MCF 10A (cell line): ENCODE measurements at regions of chr11 and their contacts with region 1.

Region 1: GRCh38 chr11:110185121-110185591 is 92.0 kb downstream of the ZC3H12C start:
- DNase-seq: peak; percentile 85
- H3K4me3 Mint-ChIP-seq: peak overlapping the region; percentile 17
- H3K27ac Mint-ChIP-seq: peak overlapping the region; percentile 89
- H3K4me1 Mint-ChIP-seq: peaks cover 41% of the 10 kb centered on the region
- H3K27me3 Mint-ChIP-seq: no peaks in the 10 kb centered on the region
- CTCF ChIP-seq: no peak

Region 2: DNA sequence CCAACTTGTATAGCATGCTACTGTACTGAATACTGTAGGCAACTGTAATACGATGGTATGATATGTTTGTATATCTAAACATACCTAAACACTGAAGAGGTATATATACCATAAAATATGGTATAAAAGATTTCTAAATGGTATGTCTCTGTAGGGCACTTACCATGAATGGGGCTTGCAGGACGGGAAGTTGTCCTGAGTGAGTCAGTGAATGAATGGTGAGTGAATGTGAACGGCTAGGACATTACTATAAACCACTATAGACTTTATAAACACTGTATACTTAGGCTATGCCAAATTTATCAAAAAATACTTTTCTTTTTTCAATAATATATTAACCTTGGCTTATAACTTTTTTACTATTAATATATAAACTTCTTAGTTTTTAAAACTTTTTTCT is 25.1 kb before region 1 on chr11:
- CTCF ChIA-PET with region 1: no interaction called
- POLR2A ChIA-PET with region 1: no interaction called
- intact Hi-C with region 1: no loop called
- DNase-seq: no peak
- H3K4me3 Mint-ChIP-seq: no peak overlapping the region
- H3K27ac Mint-ChIP-seq: peak overlapping the region; percentile 41
- H3K4me1 Mint-ChIP-seq: peaks cover 4% of the 10 kb centered on the region
- H3K27me3 Mint-ChIP-seq: no peaks in the 10 kb centered on the region
- CTCF ChIP-seq: no peak

Region 3: DNA sequence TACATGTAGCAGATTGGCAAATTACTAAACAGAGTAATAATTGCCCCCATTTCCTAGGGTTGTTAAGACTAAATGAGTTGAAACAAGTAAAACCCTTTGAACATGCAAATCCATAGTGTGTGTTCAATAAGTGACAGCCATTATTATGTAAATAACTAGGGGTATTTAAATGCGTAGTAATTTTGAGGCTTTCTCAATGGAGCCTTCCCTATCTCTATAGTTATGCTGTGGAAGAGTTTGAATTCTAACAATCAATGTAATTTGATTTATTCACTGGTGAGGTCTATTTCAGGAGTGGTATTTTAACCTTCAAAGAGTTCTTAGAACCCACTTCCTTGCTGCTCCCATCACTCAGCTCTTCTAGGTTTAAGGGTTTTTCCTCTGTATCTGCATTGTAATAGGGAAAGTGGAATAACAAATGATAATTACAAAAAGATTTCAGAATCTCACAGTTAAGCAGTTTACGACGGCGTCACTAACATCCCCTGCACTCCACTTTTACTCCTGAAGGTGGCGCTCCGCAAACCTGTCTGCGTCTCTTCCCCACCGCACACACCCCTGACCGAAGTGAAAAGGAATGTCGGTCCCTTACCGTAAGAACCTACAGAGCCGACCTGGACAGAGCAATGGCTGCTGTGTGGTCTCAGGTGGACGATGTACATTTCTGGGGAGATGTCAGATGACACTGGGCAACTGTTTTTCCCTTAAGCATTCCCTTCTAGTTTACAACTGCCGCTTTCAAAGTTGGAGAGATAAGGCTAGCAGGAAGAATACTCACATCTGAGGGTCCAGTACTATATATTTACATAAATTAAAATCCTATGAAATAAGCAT is 11.1 kb before region 1 on chr11:
- CTCF ChIA-PET with region 1: interaction called, 4 read pairs
- POLR2A ChIA-PET with region 1: interaction called, 17 read pairs
- intact Hi-C with region 1: no loop called
- DNase-seq: peak; percentile 51
- H3K4me3 Mint-ChIP-seq: no peak overlapping the region
- H3K27ac Mint-ChIP-seq: peak overlapping the region; percentile 83
- H3K4me1 Mint-ChIP-seq: peaks cover 12% of the 10 kb centered on the region
- H3K27me3 Mint-ChIP-seq: no peaks in the 10 kb centered on the region
- CTCF ChIP-seq: peak; percentile 64

Region 4: GRCh38 chr11:110272919-110273318 is 87.8 kb after region 1 on chr11:
- CTCF ChIA-PET with region 1: no interaction called
- POLR2A ChIA-PET with region 1: no interaction called
- intact Hi-C with region 1: no loop called
- DNase-seq: no peak
- H3K4me3 Mint-ChIP-seq: no peak overlapping the region
- H3K27ac Mint-ChIP-seq: no peak overlapping the region
- H3K4me1 Mint-ChIP-seq: peaks cover 20% of the 10 kb centered on the region
- H3K27me3 Mint-ChIP-seq: no peaks in the 10 kb centered on the region
- CTCF ChIP-seq: no peak